ENCODE measurements at regions of chr20 and their contacts with region 1.

Region 1: DNA sequence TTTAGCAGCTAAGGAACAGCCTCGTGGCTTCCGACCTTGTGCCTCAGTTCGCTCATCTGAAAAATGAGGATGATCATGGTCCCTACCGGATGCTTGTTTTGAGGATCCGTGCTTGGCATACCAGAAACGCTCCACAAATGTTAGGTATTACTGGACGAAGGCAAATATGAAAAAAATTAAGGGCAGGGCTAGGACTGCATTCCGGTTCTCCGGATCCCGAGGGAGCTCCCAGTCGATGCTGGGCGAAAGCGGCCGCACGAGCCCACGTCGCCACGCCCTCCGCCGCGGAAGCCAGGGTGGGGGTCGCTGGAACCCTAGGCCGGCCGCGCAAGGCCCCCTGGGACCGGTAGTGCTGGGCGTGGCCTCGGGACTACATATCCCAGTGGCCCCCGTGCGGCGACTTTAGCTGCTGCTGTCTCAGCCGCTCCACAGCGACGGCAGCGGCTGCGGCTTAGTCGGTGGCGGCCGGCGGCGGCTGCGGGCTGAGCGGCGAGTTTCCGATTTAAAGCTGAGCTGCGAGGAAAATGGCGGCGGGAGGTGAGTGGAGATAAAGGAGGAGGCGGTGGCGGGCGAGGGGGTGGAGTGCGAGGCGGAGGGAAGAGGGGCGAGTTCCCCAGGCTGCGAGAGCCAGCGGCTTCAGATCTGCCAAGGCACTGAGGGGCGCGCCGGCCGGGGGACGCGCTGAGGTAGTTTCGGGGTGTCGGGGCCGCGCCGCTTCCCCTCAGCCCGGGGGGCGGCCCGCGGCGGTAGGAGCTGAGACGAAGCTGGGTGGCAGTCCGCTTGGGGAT is at the start of gene NCOA3:
- DNase-seq: peak; percentile 96 to 99 (median 98)
- ATAC-seq: peak; percentile 96 to 99 (median 99)
- H3K4me3 ChIP-seq: peak within 1 kb of the TSS; percentile 76 to 99 (median 92)
- H3K27ac ChIP-seq: peak within 1 kb of the TSS; percentile 91 to 98 (median 95)
- H3K4me1 ChIP-seq: peaks cover 0 to 46% (median 23%) of the 10 kb centered on the region in 12 donors
- H3K27me3 ChIP-seq: no peaks in the 10 kb centered on the region
- CTCF ChIP-seq: peak; percentile 41 to 68 (median 50)
- POLR2A ChIP-seq: peak; percentile 24 to 98
- total RNA-seq, gene NCOA3: 19.4 to 39.3 (median 26.6) TPM

Region 2: DNA sequence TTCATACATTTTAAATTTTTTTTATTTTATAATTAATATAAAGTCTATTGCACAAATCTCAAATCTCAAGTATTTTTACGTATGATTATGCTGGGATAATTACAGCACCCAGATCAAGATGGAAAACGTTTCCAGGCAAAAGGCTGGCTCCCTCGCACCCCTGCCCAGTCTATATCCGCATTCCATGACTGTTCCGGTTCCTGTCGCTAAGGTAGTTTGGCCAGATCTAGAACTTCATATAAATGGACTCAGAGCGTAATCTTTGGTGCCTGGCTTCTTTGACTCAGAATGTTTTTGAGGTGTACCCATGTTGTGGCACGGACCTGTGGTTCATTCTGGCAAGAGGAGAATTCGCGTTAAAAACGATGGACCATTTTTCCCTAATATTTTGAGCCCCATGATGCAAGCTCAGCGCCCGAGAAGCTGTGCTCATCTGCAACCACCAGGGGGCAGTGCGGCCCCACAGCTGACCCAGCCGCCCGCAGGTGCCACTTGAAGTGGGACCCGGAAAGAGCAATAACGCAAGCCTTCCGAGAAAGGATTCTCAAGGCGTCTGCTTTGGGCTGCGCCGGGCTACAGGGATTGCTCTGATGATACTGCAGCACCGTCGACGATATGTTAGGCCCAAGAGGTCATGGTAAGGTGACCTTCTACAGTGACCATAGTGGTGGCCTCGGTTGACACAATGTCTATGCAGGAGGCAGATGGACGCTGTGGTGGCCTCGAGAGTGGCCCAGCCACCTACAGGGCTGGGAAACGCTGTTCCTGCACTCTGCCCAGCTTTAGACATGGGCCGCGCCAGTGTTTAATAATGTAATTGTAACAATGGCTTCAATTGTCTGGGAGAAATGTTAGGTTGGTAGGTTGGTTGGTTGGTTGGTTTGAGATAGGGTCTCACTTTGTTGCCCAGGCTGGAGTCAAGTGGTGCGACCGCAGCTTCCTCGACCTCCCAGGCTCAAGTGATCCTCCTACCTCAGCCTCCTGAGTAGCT is 305.3 kb before region 1 on chr20:
- intact Hi-C with region 1: loop called in 1 of 10 experiments (anchors 10 kb)
- DNase-seq: peak; percentile 60 to 84 (median 66)
- ATAC-seq: peak; percentile 45 to 86 (median 83)
- H3K4me3 ChIP-seq: peak overlapping the region in 1 of 12 donors; percentile 5
- H3K27ac ChIP-seq: peak overlapping the region in 1 of 12 donors; percentile 17
- H3K4me1 ChIP-seq: peaks cover 0 to 19% (median 7%) of the 10 kb centered on the region in 12 donors
- H3K27me3 ChIP-seq: no peaks in the 10 kb centered on the region
- CTCF ChIP-seq: peak; percentile 91 to 98 (median 95)
- POLR2A ChIP-seq: no peak

Region 3: GRCh38 chr20:47336129-47336835 is 165.4 kb before region 1 on chr20:
- intact Hi-C with region 1: no loop called
- DNase-seq: peak in 3 of 5 donors; percentile 38 to 70 (median 57)
- ATAC-seq: peak in 3 of 4 donors; percentile 43 to 65 (median 64)
- H3K4me3 ChIP-seq: no peak overlapping the region
- H3K27ac ChIP-seq: peak overlapping the region; percentile 47 to 88 (median 78)
- H3K4me1 ChIP-seq: peaks cover 4 to 82% (median 49%) of the 10 kb centered on the region in 12 donors
- H3K27me3 ChIP-seq: no peaks in the 10 kb centered on the region
- CTCF ChIP-seq: no peak
- POLR2A ChIP-seq: no peak

Region 4: GRCh38 chr20:47411161-47411560 is 90.5 kb before region 1 on chr20:
- intact Hi-C with region 1: loop called in 1 of 10 experiments (anchors 5 kb)
- DNase-seq: peak in 2 of 5 donors; percentile 22 to 45
- ATAC-seq: peak; percentile 78 to 80 (median 79)
- H3K4me3 ChIP-seq: peak overlapping the region in 1 of 12 donors; percentile 11
- H3K27ac ChIP-seq: peak overlapping the region; percentile 33 to 81 (median 62)
- H3K4me1 ChIP-seq: peaks cover 0 to 46% (median 24%) of the 10 kb centered on the region in 12 donors
- H3K27me3 ChIP-seq: no peaks in the 10 kb centered on the region
- CTCF ChIP-seq: no peak
- POLR2A ChIP-seq: peak in 1 of 2 donors; percentile 29

Region 5: GRCh38 chr20:47568001-47568407 is 66.3 kb after region 1 on chr20:
- intact Hi-C with region 1: loop called in 2 of 10 experiments (anchors 10 kb)
- DNase-seq: peak in 4 of 5 donors; percentile 31 to 42 (median 36)
- ATAC-seq: peak; percentile 52 to 78 (median 74)
- H3K4me3 ChIP-seq: no peak overlapping the region
- H3K27ac ChIP-seq: peak overlapping the region in 11 of 12 donors; percentile 30 to 86 (median 63)
- H3K4me1 ChIP-seq: peaks cover 13 to 65% (median 37%) of the 10 kb centered on the region in 12 donors
- H3K27me3 ChIP-seq: no peaks in the 10 kb centered on the region
- CTCF ChIP-seq: no peak
- POLR2A ChIP-seq: no peak

Region 6: DNA sequence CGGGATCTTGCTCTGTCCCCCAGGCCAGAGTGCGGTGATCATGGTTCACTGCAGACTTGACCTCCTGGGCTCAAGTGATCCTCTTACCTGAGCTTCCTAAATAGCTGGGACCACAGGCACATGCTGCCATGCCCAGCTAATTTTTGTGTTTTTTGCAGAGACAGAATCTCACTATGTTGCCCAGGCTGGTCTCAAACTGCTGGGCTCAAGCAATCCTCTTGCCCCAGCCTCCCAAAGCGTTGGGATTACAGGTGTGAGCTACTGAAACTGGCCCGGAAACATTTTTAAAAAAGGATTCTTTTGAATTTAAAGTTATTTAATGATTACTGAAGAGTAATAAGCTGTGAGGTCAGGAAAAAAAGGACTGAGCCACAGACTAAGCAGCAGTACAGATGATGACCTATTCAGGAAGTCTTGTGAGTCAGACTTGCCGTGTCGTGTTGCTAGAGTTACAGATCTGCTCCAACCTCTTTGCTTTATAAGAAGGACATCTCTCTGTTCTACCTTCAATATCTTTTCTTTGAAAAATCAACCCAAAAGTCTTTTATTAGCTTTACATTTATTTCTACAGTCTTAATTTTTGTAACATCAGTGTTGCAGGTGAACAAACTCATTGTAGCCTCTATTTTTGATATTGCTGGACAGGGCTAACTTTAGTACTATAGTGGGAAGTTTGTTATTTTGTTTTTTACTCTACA is 108.7 kb after region 1 on chr20:
- intact Hi-C with region 1: loop called in 4 of 10 experiments (anchors 5 to 10 kb)
- DNase-seq: peak in 3 of 5 donors; percentile 34 to 71 (median 39)
- ATAC-seq: peak; percentile 76 to 91 (median 88)
- H3K4me3 ChIP-seq: no peak overlapping the region
- H3K27ac ChIP-seq: peak overlapping the region in 7 of 12 donors; percentile 1 to 74 (median 16)
- H3K4me1 ChIP-seq: peaks cover 0 to 70% (median 27%) of the 10 kb centered on the region in 12 donors
- H3K27me3 ChIP-seq: no peaks in the 10 kb centered on the region
- CTCF ChIP-seq: no peak
- POLR2A ChIP-seq: no peak

Measured in heart left ventricle (tissue), 16 donors.